ENCODE measurements at regions of chr2 and their contacts with region 1.

Region 1: DNA sequence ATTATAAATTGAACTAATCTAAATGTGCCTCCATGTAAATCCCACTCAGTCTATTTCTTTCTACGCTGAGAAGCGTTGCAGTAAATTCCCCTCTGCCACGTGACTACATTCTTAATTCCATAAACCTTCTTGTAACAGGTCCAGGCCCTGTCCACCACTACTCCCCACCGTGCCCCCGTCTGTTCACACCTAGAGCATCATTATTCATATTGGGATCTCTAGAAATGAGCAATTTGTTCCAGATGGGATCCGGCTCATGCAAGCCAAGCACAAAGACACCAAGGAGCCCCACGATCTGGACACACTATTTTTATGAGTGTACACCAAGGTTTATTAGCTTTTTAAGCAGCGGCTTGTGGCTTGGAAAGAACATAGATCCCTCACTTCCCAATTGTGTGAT is 38.2 kb downstream of the BOLA3 start:
- DNase-seq: no peak
- ATAC-seq: no peak
- H3K4me3 ChIP-seq: no peak overlapping the region
- H3K4me3 Mint-ChIP-seq: no peak overlapping the region
- H3K27ac ChIP-seq: no peak overlapping the region
- H3K27ac Mint-ChIP-seq: no peak overlapping the region
- H3K4me1 ChIP-seq: no peaks in the 10 kb centered on the region
- H3K4me1 Mint-ChIP-seq: no peaks in the 10 kb centered on the region
- H3K27me3 ChIP-seq: no peaks in the 10 kb centered on the region
- H3K27me3 Mint-ChIP-seq: peaks cover 0 to 3% of the 10 kb centered on the region in 2 donors

Region 2: GRCh38 chr2:74198461-74199274 is 89.1 kb after region 1 on chr2 and contains the start of gene MTHFD2:
- CTCF ChIA-PET with region 1: interaction called in 1 of 2 experiments, 11 read pairs
- POLR2A ChIA-PET with region 1: no interaction called
- DNase-seq: peak; percentile 73 to 93 (median 83)
- ATAC-seq: peak; percentile 89 to 91 (median 89)
- H3K4me3 ChIP-seq: peak within 1 kb of the TSS; percentile 69 to 72
- H3K4me3 Mint-ChIP-seq: peak within 1 kb of the TSS; percentile 92 to 99 (median 94)
- H3K27ac ChIP-seq: peak within 1 kb of the TSS; percentile 85
- H3K27ac Mint-ChIP-seq: peak within 1 kb of the TSS; percentile 100
- H3K4me1 ChIP-seq: peaks cover 10 to 21% of the 10 kb centered on the region in 2 experiments
- H3K4me1 Mint-ChIP-seq: peaks cover 33 to 37% (median 37%) of the 10 kb centered on the region in 3 donors
- H3K27me3 ChIP-seq: peaks cover 0 to 5% of the 10 kb centered on the region in 2 experiments
- H3K27me3 Mint-ChIP-seq: no peaks in the 10 kb centered on the region
- total RNA-seq, gene MTHFD2: 26.3 to 59.3 (median 47.9) TPM

Measured in T-cell (primary cell).